H1 (cell line): ENCODE measurements at regions of chr10 and their contacts with region 1.

Region 1: DNA sequence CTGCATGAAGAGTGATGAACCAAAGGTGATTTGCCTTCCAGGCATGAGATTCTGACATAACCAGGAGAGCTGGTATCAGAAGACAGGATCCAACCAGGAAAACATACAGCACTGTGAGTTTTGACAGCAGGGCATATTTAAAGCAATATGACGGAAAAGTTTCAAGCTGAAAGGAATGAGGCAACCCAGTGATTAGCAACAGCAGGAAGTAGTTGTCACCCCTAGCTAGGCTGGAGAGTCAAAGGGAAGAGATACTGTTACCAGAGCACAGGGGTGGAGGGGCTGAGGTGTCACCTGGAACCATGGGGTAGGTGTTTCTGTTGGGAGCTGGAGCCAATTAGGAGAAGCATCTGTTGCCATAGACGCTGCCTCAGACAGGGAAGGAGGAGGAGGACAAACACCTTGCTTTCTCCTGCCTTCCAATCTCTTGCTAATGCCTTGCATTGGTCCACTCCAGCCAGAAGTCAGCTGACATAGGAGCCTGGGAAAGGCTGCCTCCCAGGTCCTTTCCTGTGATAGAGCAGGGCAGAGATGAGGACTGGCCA is 125.3 kb upstream of the SORCS3 start:
- DNase-seq: no peak
- H3K4me3 ChIP-seq: no peak overlapping the region
- H3K27ac ChIP-seq: no peak overlapping the region
- H3K4me1 ChIP-seq: peaks cover 0 to 6% (median 1%) of the 10 kb centered on the region in 4 experiments; a peak in 2 of 7 replicates
- H3K27me3 ChIP-seq: no peaks in the 10 kb centered on the region
- CTCF ChIP-seq: no peak
- EP300 ChIP-seq: no peak
- POLR2A ChIP-seq: no peak
- RAD21 ChIP-seq: no peak

Region 2: DNA sequence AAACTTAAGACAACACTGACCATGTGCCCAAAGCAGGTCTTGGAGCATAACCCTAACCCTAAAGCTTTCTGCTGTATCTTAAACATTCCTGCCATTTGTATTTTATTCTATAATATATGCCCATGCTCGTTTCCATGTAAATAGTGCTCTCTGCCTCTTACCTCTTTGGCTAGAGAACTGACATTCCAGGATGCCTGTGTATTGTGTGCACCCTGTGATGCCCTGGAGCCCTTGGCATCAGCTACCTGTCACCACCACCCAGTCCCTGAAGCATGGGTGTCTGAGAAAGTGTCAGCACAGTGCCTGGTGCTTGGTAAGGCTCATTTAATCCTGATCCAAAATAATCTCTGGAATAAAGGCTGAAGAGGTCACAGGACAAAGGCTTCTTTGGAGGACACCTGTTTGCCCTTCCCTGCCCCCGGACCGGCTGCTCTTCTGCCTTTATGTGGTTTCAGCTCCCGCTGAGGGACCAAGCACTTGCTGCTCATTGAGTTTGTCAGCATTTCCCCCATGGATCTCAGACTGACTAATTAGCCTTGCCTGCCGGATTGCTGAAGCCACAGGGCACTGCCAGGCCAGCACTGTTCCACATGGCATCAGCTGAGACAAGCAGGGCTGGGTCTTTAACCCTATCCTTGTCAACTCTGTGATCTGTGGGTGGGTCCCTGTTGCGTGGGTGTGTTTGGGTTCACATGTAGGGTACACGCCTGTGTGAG is 13.7 kb before region 1 on chr10:
- CTCF ChIA-PET with region 1: interaction called, 14 read pairs
- POLR2A ChIA-PET with region 1: no interaction called
- DNase-seq: no peak
- H3K4me3 ChIP-seq: no peak overlapping the region
- H3K27ac ChIP-seq: no peak overlapping the region
- H3K4me1 ChIP-seq: peaks cover 0 to 8% (median 5%) of the 10 kb centered on the region in 4 experiments; a peak in 5 of 7 replicates
- H3K27me3 ChIP-seq: no peaks in the 10 kb centered on the region
- CTCF ChIP-seq: no peak
- EP300 ChIP-seq: no peak
- POLR2A ChIP-seq: no peak
- RAD21 ChIP-seq: no peak

Region 3: DNA sequence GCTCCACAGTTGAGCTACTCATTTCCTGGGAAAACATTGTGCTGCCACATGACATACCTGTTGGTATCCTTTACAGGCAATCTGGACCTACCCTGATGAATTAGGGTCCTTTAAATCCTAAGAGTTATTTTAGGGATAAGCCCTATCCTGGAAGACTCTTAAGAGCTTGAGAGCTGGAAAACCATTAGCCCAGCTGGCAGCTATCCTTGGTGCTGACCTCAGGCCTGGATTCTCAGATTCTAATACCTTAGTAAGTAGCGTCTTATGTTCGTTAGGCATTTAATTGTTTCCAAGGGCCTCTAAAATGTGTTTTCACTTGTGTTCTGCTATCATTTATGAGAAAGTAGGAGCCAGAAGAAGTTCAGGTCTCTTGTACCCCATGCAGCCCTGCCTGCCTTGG is 32.3 kb after region 1 on chr10:
- CTCF ChIA-PET with region 1: interaction called, 10 read pairs
- POLR2A ChIA-PET with region 1: no interaction called
- DNase-seq: peak; percentile 5 to 54
- H3K4me3 ChIP-seq: no peak overlapping the region
- H3K27ac ChIP-seq: no peak overlapping the region
- H3K4me1 ChIP-seq: peaks cover 0 to 3% (median 1%) of the 10 kb centered on the region in 4 experiments; a peak in 3 of 7 replicates
- H3K27me3 ChIP-seq: no peaks in the 10 kb centered on the region
- CTCF ChIP-seq: no peak
- EP300 ChIP-seq: no peak
- POLR2A ChIP-seq: no peak
- RAD21 ChIP-seq: no peak

Region 4: DNA sequence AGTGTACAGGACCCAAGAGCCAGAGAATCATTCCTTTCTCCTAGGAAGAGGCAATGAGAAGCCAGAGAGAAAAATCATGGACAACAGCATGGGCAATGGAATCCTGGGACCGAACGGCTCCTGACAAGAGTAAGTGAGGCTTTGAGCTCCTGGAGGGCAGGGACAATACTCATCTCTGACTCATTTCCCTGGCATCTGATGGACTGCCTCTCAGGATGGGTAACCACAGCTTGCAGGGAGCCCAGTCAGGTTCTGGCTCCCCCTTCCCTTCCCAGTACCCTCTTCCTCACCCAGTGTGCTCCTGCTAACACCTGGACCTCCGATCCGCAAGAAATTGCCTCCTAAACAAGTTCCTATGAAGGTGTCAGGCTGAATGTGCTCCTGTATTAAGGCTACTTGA is 74.1 kb after region 1 on chr10:
- CTCF ChIA-PET with region 1: no interaction called
- POLR2A ChIA-PET with region 1: no interaction called
- DNase-seq: no peak
- H3K4me3 ChIP-seq: no peak overlapping the region
- H3K27ac ChIP-seq: no peak overlapping the region
- H3K4me1 ChIP-seq: peaks cover 0 to 3% (median 0%) of the 10 kb centered on the region in 4 experiments; a peak in 2 of 7 replicates
- H3K27me3 ChIP-seq: no peaks in the 10 kb centered on the region
- CTCF ChIP-seq: no peak
- EP300 ChIP-seq: no peak
- POLR2A ChIP-seq: no peak
- RAD21 ChIP-seq: no peak

Region 5: GRCh38 chr10:104732222-104732621 is 216.5 kb after region 1 on chr10:
- CTCF ChIA-PET with region 1: no interaction called
- POLR2A ChIA-PET with region 1: no interaction called
- DNase-seq: no peak
- H3K4me3 ChIP-seq: no peak overlapping the region
- H3K27ac ChIP-seq: no peak overlapping the region
- H3K4me1 ChIP-seq: peaks cover 0 to 15% (median 11%) of the 10 kb centered on the region in 4 experiments; a peak in 4 of 7 replicates
- H3K27me3 ChIP-seq: no peaks in the 10 kb centered on the region; a peak in 1 of 7 replicates
- CTCF ChIP-seq: no peak
- EP300 ChIP-seq: no peak
- POLR2A ChIP-seq: no peak
- RAD21 ChIP-seq: no peak